ENCODE measurements at regions of chr7 and their contacts with region 1.

Region 1: DNA sequence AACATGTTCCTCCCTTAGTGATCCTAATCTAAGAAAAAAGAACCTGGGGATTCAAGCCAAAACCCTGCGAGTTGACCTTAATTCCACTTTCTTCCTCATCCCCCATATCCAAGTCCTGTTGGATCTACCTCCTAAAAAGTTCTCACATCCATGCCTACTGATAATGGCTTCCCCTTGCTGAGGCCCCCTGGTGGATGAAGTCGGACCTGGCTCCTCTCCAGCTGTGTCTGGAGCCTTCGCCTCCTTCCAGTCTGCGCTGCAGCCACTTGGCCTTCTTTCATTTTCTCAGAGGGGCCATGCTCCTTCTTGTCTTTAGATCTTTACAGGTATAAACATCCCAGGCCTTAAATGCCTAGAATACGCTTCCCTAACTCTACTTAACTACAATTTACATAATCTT is 8.1 kb downstream of the PDE1C start:
- DNase-seq: peak in 7 of 10 donors; percentile 28 to 92 (median 69)

Region 2: GRCh38 chr7:31782411-31782991 is 279.6 kb before region 1 on chr7:
- intact Hi-C with region 1: loop called (anchors 10 kb)
- DNase-seq: no peak